Right ventricle myocardium inferior (tissue), 1 donor: ENCODE measurements at regions of chr3 and their contacts with region 1.

Region 1: DNA sequence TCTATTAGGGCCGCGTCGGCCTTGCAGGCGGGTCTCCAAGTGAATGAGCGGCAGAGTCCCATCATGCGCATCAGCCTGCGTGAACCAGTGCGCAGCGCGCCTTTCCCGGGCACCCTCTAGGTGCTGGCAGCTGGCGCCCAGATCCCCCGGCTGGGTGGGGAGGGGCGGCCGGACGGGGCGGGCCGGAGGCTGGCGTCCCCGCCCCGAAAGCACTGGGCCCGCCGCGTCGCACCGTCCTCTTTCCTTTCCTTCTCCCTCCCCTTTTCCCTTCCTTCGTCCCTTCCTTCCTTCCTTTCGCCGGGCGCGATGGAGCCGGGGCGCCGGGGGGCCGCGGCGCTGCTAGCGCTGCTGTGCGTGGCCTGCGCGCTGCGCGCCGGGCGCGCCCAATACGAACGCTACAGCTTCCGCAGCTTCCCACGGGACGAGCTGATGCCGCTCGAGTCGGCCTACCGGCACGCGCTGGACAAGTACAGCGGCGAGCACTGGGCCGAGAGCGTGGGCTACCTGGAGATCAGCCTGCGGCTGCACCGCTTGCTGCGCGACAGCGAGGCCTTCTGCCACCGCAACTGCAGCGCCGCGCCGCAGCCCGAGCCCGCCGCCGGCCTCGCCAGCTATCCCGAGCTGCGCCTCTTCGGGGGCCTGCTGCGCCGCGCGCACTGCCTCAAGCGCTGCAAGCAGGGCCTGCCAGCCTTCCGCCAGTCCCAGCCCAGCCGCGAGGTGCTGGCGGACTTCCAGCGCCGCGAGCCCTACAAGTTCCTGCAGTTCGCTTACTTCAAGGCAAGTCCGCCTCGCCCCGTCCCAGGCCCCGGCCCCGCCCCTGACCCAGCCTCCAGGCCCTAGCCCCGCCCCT is at the start of gene CRTAP:
- DNase-seq: peak; percentile 98
- ATAC-seq: peak; percentile 97
- total RNA-seq, gene CRTAP: 93.4 TPM

Region 2: GRCh38 chr3:33096093-33096868 is 17.7 kb before region 1 on chr3:
- intact Hi-C with region 1: loop called (anchors 2 kb)
- DNase-seq: peak; percentile 88
- ATAC-seq: peak; percentile 59

Region 3: DNA sequence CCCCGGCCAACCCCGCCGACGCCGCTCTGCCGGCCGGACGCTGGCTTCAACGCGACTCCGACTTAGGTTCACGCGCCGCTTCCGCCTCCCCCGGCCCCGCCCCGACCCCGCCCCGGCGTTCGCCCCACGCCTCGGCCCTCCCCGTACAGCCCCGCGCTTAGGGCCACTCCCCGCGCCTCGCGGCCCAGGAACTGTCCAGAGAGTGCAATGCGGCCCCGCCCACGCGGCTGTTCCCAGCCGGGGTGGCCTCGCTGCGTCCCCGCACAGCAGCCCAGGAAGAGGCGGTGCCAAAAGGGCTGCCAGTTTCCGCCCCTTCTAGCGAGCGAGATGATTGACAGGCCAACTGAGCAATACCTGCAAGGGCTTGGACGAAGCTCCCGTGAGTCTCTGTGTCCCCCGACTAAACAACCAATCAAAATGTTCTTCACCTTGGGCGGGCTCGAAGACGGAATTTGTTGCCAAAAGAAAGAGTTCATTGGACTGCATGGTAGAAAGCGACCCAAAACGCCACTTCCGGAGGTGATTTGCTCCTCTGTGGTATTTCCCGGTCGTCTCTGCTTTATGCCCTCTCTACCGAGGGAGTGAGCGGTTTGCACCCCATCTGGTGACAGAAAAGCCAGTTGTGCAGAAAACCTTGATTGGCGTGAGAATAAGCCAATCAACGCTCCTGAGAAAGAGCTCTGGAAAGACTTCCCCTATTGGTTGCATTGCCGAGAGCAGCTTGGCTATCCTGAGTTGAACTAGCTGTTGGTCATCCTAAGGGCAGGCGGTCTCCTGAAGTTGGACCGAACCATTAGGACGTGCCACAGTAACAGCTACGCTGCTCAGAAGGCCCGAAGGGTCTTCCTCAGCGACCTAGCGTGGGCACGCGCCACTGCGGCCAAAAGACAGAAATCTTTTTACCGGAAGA is 326.6 kb after region 1 on chr3 and contains the start of gene UBP1:
- intact Hi-C with region 1: loop called (anchors 10 kb)
- DNase-seq: peak; percentile 100
- ATAC-seq: peak; percentile 98
- total RNA-seq, gene UBP1: 42.3 TPM